ENCODE measurements at regions of chr5 and their contacts with region 1.

Region 1: DNA sequence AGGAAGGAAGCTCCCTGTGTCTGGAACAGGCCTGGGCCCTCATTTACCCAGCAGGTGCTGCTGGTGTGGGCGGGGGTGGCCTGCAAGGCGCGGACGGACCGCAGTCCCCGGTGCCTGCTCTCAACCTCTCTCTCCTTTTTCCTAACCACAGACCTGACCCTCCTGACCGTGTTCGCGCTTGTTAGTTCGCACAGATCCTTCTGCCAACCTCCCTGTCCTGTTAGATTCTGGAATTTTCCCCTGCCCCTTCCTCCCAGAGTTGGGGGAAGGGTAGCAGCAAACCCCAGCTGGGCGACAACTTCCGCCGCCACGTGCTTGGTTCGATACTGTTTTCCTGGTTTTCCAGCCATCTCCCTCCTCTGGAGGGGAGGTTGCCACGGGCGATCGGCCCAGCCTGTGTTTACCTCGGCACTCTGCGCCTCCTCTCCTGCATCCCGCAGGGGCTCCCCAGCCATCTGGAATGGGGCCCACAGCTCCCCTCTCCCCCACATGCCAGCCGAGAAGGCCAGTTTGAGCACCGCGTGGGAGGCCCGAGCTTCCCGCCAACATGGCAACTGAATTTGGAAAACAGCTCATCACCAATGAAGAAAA is 70.8 kb upstream of the UNC5A start:
- DNase-seq: peak; percentile 88

Region 2: DNA sequence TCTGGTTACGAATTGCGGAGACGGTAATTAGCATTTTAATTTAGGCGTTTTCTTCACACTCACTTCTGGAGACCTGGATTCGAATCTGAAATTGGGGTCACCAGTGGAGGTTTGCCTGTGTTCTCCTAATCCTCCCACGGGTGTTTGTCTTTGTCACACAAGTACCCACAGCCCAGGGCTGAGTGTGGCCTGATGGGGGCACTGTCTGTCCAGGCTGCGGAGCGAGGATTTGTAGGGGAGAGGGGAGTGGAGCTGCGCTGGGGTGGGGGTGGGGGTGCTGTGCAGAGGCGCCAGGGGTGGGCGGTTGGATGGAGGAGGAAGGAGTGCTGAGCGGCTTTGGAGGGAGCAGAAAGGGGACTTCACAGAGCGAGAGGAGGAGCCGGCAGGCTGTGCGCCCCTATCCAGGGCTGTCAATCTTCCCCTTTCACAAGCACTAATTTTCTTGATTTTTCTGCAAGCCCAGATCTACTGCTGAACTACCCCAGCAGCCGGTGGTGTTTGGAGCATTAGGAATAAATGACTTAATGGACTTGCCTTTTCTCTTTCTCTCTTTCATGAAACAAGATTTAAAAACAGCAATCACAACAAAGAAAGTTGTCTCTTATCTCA is 39.2 kb before region 1 on chr5:
- in situ Hi-C with region 1: no loop called
- DNase-seq: no peak

Region 3: DNA sequence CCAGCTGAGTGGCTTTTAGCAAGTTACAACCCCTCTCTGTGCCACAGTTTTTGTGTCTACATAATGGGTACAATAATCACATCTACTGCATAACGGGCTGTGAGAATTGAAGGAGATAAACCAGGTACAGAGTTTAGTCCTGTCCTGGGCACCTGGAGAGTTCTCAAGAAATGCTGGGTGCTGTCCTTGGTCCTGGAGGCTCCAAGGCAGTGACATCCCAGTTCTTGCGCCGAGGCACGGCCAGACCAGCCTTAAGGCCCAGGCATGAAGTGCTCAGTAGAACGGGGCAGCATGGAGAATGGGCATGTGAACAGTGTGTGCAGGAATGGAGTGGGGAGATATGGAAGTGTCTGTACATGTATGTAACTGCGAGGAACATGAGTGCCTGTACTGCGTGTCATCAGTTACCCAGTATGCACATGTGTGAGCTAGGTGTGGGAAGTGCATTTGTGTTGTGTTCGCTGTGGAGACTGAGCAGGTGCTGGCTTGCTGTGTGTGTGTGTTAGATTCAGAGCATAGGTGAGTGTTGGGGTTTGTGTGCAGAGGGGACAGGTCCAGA is 64.5 kb after region 1 on chr5:
- in situ Hi-C with region 1: loop called (anchors 5 kb)
- DNase-seq: no peak